Calu3 (cell line): ENCODE measurements at regions of chr22 and their contacts with region 1.

Region 1: DNA sequence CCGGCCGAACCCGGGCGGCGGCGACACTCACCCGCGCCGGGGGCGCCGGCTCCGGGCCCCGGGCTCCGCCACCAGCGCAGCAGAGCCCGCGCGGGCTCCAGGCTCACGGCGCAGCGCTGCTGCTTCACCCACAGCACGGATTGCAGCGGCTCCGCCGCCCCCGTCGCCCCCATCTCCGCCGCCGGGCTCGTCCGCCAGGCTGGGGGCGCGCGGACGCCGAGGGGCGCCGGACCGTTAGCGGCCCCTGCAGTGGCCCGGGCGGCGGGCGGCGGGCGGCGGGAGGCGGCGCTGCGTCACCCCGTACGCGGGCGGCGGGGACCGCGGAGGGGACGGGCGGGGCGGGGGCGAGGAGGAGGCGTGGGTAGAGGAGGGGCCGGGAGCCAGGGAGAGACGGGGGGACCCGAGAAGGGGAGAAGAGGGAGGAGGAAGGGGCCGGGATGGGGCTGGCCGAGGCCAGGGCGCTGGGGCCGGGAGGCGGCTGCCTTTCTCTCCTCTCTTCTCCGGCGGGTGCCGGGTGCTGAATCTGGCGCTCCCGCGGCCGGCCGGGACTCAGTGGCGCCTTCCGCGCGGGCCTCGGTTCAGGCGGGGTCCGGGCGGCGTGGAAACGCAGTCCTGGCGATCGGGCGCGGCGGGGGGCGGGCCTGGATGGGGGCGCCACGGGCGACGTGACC is at the start of gene CERK:
- DNase-seq: peak; percentile 70
- H3K4me3 Mint-ChIP-seq: peak within 1 kb of the TSS; percentile 83
- H3K27ac Mint-ChIP-seq: peak within 1 kb of the TSS; percentile 30
- H3K4me1 Mint-ChIP-seq: peaks cover 36% of the 10 kb centered on the region
- H3K27me3 Mint-ChIP-seq: no peaks in the 10 kb centered on the region
- CTCF ChIP-seq: peak; percentile 14
- total RNA-seq, gene CERK: 20.3 and 25.0 TPM in 2 replicates

Region 2: DNA sequence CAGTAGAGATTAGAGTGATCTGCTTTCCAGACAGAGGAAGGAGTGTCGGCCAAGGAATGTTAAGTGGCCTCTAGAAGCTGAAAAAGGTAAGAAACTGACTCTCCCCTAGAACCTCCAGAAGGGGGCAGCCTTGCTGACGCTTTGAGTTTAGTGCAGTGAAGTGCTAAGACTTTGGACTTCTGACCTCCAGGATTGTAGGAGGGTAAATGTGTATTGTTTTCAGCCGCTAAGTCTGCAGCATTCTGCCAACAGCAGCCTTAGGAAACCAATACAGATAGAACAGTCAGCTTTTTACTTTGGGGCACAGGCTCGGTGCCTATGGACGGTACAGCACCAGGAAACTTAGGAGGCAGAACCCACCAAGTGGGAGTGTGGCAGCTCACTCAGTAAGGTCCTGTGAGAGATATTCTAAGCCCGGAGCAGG is 20.8 kb after region 1 on chr22:
- CTCF ChIA-PET with region 1: interaction called, 20 read pairs
- intact Hi-C with region 1: no loop called
- DNase-seq: peak; percentile 65
- H3K4me3 Mint-ChIP-seq: no peak overlapping the region
- H3K27ac Mint-ChIP-seq: peak overlapping the region; percentile 2
- H3K4me1 Mint-ChIP-seq: peaks cover 44% of the 10 kb centered on the region
- H3K27me3 Mint-ChIP-seq: no peaks in the 10 kb centered on the region
- CTCF ChIP-seq: peak; percentile 77

Region 3: DNA sequence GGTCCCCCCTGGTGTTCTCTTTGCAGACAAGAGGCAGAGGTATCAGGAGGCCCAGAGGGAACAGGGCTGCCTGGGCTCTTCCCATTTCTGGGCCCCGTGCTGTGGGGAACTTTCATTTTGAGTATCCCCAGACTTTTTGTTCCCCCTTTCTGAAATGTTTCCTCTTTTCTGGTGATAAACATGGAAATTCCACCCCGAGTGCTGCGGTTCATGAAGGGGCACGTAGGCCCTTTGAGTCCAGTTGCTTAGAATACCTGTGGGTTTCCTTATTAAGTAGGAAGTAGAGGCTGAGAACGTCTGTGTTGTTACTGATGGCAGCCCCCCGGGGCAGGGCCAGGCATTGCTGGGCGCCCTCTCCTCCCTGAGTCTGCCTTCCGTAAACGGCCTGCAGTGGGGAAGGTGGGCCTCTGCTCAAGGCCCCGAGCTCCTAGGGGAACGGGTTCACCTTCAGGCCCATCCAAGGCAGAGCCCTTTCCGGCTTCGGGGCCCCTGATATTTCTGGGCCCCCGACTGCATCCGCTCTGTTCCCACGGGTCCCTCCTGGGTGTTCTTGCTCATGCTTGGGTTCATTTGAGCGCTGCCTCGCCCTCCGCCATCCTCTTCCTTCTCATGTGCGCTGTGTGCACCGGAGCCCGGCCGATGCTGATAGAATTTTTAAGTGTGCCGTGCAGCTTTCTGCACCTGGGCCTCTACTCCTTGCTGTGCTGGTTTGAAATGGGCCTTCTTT is 36.3 kb after region 1 on chr22:
- CTCF ChIA-PET with region 1: no interaction called
- intact Hi-C with region 1: loop called (anchors 5 kb)
- DNase-seq: no peak
- H3K4me3 Mint-ChIP-seq: no peak overlapping the region
- H3K27ac Mint-ChIP-seq: no peak overlapping the region
- H3K4me1 Mint-ChIP-seq: peaks cover 42% of the 10 kb centered on the region
- H3K27me3 Mint-ChIP-seq: no peaks in the 10 kb centered on the region
- CTCF ChIP-seq: no peak

Region 4: DNA sequence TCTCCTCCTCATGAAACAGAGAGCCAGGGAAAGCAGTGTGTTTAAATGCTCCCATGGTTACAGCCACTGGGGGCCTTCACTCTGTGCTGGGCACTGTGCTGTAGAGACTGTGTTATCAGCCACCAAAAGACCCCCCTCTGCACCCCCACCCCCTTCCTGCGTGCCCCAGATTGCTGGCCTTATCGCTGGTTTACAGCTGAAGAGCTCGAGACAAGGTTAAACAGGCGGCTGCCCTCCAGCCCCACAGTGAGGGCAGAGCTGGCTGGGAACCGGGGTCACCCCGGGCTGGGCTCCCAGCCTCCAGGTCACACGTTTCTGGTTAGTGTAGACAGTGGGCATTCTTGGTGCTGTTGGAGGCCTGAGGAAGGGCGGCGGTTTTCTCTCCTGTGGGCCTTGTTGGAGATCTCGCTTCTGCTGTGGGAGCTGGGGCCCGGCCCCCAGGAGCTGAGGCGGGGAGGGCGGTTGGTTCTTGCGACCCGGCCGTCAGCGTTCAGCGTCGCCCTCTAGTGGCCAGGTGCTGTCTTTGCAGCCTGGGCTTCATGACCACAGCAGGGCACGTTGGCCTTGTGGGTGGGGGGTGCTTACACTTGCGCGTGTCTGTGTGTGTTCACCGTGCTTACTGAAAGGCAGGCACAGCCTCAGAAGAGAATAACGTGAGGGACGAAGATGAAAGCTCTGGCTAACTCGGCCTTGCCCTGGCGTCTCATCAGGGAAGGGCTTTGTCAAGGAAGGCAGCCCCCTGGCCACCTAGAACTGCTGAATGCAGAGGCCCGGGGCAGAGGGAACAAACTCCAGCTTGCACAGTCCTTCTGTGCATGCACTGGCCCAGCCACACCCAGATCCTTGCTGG is 65.1 kb after region 1 on chr22:
- CTCF ChIA-PET with region 1: interaction called, 20 read pairs
- intact Hi-C with region 1: loop called (anchors 2 kb)
- DNase-seq: peak; percentile 69
- H3K4me3 Mint-ChIP-seq: no peak overlapping the region
- H3K27ac Mint-ChIP-seq: no peak overlapping the region
- H3K4me1 Mint-ChIP-seq: peaks cover 13% of the 10 kb centered on the region
- H3K27me3 Mint-ChIP-seq: no peaks in the 10 kb centered on the region
- CTCF ChIP-seq: peak; percentile 96